Activated T-helper 1 cell treated with anti-CD3 and anti-CD28 coated beads, Interleukin-12 subunit alpha, Interleukin-12 subunit beta, Interleukin-2, Interleukin-4 antibody, amounts not matched to agents 30 ng/mL and 10 ng/mL and 1 ng/mL, durations not matched to agents 14 hours and 24 hours and 36 hours (primary cell): ENCODE measurements at regions of chr16 and their contacts with region 1.

Region 1: DNA sequence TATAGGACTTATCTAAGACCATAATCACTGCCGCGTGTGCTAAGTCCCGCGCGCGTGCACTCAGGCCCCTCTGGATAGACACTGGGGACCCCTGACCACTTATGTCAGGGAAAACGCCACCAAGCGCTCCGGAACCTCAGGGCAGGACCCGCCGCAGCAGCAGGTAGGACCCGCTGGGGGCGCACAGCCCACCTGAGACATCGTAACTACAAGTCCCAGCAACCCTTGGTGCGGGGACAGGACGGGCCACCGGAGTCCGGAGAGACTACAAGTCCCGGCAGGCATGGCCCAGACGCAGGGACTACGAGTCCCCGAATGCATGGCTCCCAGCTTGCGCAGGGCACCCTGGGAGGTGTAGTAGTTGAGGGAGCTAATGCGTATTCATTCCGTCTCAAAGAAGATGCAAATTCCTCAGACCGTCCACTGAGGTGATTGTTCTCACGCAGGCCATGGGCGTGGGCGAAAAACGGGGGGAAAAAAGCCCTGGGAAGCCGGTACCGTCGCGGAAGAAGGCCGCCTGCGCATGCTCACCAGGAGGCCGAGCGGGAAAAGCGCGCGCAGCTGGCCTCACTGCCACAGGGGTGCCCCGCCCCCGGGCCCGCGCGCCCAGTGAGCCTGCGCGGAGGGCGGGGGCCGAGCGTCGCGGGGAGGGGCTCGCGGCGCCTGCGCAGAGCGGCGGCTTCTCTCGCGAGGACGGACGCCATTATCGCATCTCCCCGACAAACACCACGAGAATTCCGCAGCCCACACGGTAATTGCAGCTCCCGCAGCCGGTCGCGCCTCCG is at the start of gene BANP:
- DNase-seq: peak; percentile 95
- H3K4me3 Mint-ChIP-seq: peak within 1 kb of the TSS; percentile 94
- H3K27ac Mint-ChIP-seq: peak within 1 kb of the TSS; percentile 94
- H3K4me1 Mint-ChIP-seq: peaks cover 49% of the 10 kb centered on the region
- H3K27me3 Mint-ChIP-seq: no peaks in the 10 kb centered on the region
- total RNA-seq, gene BANP: 35.4 and 35.5 TPM in 2 replicates

Region 2: DNA sequence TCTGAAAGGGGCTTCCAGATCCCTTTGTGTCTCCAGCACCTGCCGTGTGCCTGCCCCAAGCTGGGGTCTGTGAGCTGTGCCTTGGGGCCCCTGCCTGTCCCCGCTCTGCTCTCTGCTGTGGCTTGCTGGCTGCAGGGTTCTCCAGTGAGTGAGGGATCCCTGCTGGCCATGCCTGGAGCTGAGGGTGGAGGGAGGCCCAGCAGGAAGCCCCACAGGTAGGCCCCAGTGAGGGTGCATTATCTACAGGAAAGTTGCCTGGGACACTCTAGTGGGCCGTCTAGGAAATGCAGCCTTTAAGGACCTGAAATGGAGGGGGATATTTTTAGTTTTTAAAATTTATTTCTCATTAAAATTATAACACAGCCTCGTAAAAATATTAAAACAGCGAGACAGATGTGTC is 297.7 kb before region 1 on chr16:
- intact Hi-C with region 1: no loop called
- DNase-seq: no peak
- H3K4me3 Mint-ChIP-seq: no peak overlapping the region
- H3K27ac Mint-ChIP-seq: no peak overlapping the region
- H3K4me1 Mint-ChIP-seq: no peaks in the 10 kb centered on the region
- H3K27me3 Mint-ChIP-seq: peaks cover 6% of the 10 kb centered on the region

Region 3: GRCh38 chr16:87895641-87896141 is 55.3 kb before region 1 on chr16:
- intact Hi-C with region 1: loop called (anchors 1 kb)
- DNase-seq: peak; percentile 83
- H3K4me3 Mint-ChIP-seq: peak overlapping the region; percentile 76
- H3K27ac Mint-ChIP-seq: peak overlapping the region; percentile 100
- H3K4me1 Mint-ChIP-seq: peaks cover 56% of the 10 kb centered on the region
- H3K27me3 Mint-ChIP-seq: no peaks in the 10 kb centered on the region

Region 4: DNA sequence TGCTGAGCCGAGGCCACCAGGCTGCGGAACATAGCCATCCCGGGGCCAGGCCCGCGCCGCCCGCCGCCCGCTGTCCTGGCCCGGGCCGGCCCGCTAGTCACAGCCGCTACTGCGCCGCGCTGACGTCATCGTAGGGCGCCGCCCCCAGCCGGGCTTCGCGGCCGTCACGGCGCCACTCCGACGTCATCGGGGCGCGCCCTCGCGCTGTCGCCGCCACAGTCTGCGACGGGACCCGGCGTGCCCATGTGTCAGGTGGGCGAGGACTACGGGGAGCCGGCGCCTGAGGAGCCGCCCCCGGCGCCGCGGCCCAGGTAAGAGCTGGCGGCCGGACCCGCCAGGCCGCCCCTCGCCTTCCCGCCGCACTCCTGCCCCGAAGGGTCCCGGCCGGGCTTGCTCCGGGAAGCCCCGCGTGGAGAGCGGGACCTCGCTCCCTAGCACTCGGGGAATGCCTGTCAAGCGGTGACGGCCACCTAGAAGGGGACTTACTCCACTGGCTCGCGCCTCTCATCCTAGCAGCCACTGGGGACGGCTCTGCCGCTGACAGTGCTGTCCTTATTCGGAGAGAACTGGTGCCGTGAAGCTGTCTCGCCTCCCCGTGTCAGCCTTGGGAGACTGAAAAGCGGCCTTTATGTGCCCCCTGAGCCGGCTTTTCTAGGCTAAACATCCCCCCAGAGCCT is 755.5 kb after region 1 on chr16 and contains the starts of genes CTU2 and RNF166:
- intact Hi-C with region 1: loop called (anchors 10 kb)
- DNase-seq: peak; percentile 92
- H3K4me3 Mint-ChIP-seq: peak within 1 kb of the TSS; percentile 89
- H3K27ac Mint-ChIP-seq: peak within 1 kb of the TSS; percentile 86
- H3K4me1 Mint-ChIP-seq: peaks cover 47% of the 10 kb centered on the region
- H3K27me3 Mint-ChIP-seq: no peaks in the 10 kb centered on the region
- total RNA-seq, gene CTU2: 66.3 and 74.7 TPM in 2 replicates
- total RNA-seq, gene RNF166: 42.4 and 45.0 TPM in 2 replicates